ENCODE measurements at regions of chr12 and their contacts with region 1.

Region 1: GRCh38 chr12:14845350-14845750 is 2.0 kb upstream of the ART4 start:
- DNase-seq: peak; percentile 65
- ATAC-seq: peak; percentile 77
- H3K4me3 ChIP-seq: no peak overlapping the region
- H3K27ac ChIP-seq: no peak overlapping the region; the same call in 1 of the 2 replicates
- H3K4me1 ChIP-seq: peaks cover 3% of the 10 kb centered on the region; the same call in 1 of the 2 replicates
- H3K27me3 ChIP-seq: no peaks in the 10 kb centered on the region
- CTCF ChIP-seq: peak; percentile 85
- POLR2A ChIP-seq: no peak
- RAD21 ChIP-seq: peak; percentile 81

Region 2: GRCh38 chr12:14629832-14630710 is 215.3 kb before region 1 on chr12:
- CTCF ChIA-PET with region 1: no interaction called
- POLR2A ChIA-PET with region 1: no interaction called
- dilution Hi-C with region 1: no loop called
- in situ Hi-C with region 1: no loop called
- intact Hi-C with region 1: loop called (anchors 10 kb)
- DNase-seq: peak; percentile 62
- ATAC-seq: peak; percentile 100
- H3K4me3 ChIP-seq: no peak overlapping the region
- H3K27ac ChIP-seq: no peak overlapping the region
- H3K4me1 ChIP-seq: no peaks in the 10 kb centered on the region
- H3K27me3 ChIP-seq: no peaks in the 10 kb centered on the region
- CTCF ChIP-seq: peak; percentile 92
- POLR2A ChIP-seq: no peak
- RAD21 ChIP-seq: peak; percentile 88

Region 3: GRCh38 chr12:14723763-14724162 is 121.6 kb before region 1 on chr12:
- CTCF ChIA-PET with region 1: no interaction called
- POLR2A ChIA-PET with region 1: no interaction called
- dilution Hi-C with region 1: no loop called
- in situ Hi-C with region 1: no loop called
- intact Hi-C with region 1: loop called (anchors 1 kb)
- DNase-seq: peak; percentile 58
- ATAC-seq: peak; percentile 80
- H3K4me3 ChIP-seq: no peak overlapping the region
- H3K27ac ChIP-seq: no peak overlapping the region
- H3K4me1 ChIP-seq: no peaks in the 10 kb centered on the region
- H3K27me3 ChIP-seq: no peaks in the 10 kb centered on the region
- CTCF ChIP-seq: peak; percentile 74
- POLR2A ChIP-seq: no peak
- RAD21 ChIP-seq: peak; percentile 78

Region 4: GRCh38 chr12:15151161-15152120 is 306.1 kb after region 1 on chr12:
- CTCF ChIA-PET with region 1: no interaction called
- POLR2A ChIA-PET with region 1: no interaction called
- dilution Hi-C with region 1: no loop called
- in situ Hi-C with region 1: no loop called
- intact Hi-C with region 1: loop called (anchors 5 kb)
- DNase-seq: no peak
- ATAC-seq: no peak
- H3K4me3 ChIP-seq: no peak overlapping the region
- H3K27ac ChIP-seq: no peak overlapping the region
- H3K4me1 ChIP-seq: no peaks in the 10 kb centered on the region
- H3K27me3 ChIP-seq: no peaks in the 10 kb centered on the region; the same call in 1 of the 2 replicates
- CTCF ChIP-seq: peak; percentile 31
- POLR2A ChIP-seq: no peak
- RAD21 ChIP-seq: no peak